ENCODE measurements at regions of chr20 and their contacts with region 1.

Region 1: GRCh38 chr20:33686100-33686983 is at the start of gene E2F1:
- DNase-seq: peak; percentile 98
- H3K4me3 Mint-ChIP-seq: peak within 1 kb of the TSS; percentile 93
- H3K27ac Mint-ChIP-seq: peak within 1 kb of the TSS; percentile 87
- H3K4me1 Mint-ChIP-seq: peaks cover 70% of the 10 kb centered on the region
- H3K27me3 Mint-ChIP-seq: no peaks in the 10 kb centered on the region
- total RNA-seq, gene E2F1: 66.8 to 67.8 TPM

Region 2: DNA sequence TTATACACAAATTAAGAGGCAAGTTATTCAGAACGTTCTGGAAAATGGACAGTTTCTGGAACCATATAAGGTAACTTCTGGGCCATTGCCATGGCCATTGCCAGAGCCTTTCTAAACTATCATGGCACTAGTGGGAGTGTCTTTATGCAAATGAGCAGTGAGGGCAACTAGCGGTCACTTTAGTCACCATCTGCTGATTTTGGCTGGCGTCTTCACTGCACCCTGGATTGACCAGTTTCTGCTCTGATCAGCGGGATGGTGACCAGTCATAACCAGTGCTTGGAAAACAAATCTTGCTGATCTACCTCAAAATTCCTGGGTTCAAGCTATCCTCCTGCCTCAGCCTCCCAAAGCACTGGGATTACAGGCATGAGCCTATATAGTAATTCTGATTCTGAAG is 235.5 kb before region 1 on chr20:
- CTCF ChIA-PET with region 1: no interaction called
- POLR2A ChIA-PET with region 1: no interaction called
- intact Hi-C with region 1: no loop called
- DNase-seq: no peak
- H3K4me3 Mint-ChIP-seq: no peak overlapping the region
- H3K27ac Mint-ChIP-seq: no peak overlapping the region
- H3K4me1 Mint-ChIP-seq: no peaks in the 10 kb centered on the region
- H3K27me3 Mint-ChIP-seq: no peaks in the 10 kb centered on the region

Region 3: GRCh38 chr20:33719989-33720709 is 33.8 kb after region 1 on chr20 and contains the start of gene PXMP4:
- CTCF ChIA-PET with region 1: interaction called, 5 read pairs
- POLR2A ChIA-PET with region 1: interaction called, 8 read pairs
- intact Hi-C with region 1: loop called (anchors 1 kb)
- DNase-seq: peak; percentile 95
- H3K4me3 Mint-ChIP-seq: peak within 1 kb of the TSS; percentile 95
- H3K27ac Mint-ChIP-seq: peak within 1 kb of the TSS; percentile 75
- H3K4me1 Mint-ChIP-seq: peaks cover 23% of the 10 kb centered on the region
- H3K27me3 Mint-ChIP-seq: no peaks in the 10 kb centered on the region
- total RNA-seq, gene PXMP4: 8.7 to 11.6 TPM

Region 4: GRCh38 chr20:34111702-34112599 is 425.6 kb after region 1 on chr20 and contains the start of gene EIF2S2:
- CTCF ChIA-PET with region 1: no interaction called
- POLR2A ChIA-PET with region 1: interaction called, 3 read pairs
- intact Hi-C with region 1: loop called (anchors 5 kb)
- DNase-seq: peak; percentile 97
- H3K4me3 Mint-ChIP-seq: peak within 1 kb of the TSS; percentile 97
- H3K27ac Mint-ChIP-seq: peak within 1 kb of the TSS; percentile 98
- H3K4me1 Mint-ChIP-seq: peaks cover 41% of the 10 kb centered on the region
- H3K27me3 Mint-ChIP-seq: no peaks in the 10 kb centered on the region
- total RNA-seq, gene EIF2S2: 151 to 155 TPM

Region 5: GRCh38 chr20:34232494-34233087 is 546.2 kb after region 1 on chr20:
- CTCF ChIA-PET with region 1: no interaction called
- POLR2A ChIA-PET with region 1: no interaction called
- intact Hi-C with region 1: no loop called
- DNase-seq: no peak
- H3K4me3 Mint-ChIP-seq: no peak overlapping the region
- H3K27ac Mint-ChIP-seq: no peak overlapping the region
- H3K4me1 Mint-ChIP-seq: no peaks in the 10 kb centered on the region
- H3K27me3 Mint-ChIP-seq: peaks cover 5% of the 10 kb centered on the region

Measured in activated CD4-positive, alpha-beta memory T cell treated with anti-CD3 and anti-CD28 coated beads for 36 hours (primary cell).